WTC11 (cell line): ENCODE measurements at regions of chr22 and their contacts with region 1.

Region 1: DNA sequence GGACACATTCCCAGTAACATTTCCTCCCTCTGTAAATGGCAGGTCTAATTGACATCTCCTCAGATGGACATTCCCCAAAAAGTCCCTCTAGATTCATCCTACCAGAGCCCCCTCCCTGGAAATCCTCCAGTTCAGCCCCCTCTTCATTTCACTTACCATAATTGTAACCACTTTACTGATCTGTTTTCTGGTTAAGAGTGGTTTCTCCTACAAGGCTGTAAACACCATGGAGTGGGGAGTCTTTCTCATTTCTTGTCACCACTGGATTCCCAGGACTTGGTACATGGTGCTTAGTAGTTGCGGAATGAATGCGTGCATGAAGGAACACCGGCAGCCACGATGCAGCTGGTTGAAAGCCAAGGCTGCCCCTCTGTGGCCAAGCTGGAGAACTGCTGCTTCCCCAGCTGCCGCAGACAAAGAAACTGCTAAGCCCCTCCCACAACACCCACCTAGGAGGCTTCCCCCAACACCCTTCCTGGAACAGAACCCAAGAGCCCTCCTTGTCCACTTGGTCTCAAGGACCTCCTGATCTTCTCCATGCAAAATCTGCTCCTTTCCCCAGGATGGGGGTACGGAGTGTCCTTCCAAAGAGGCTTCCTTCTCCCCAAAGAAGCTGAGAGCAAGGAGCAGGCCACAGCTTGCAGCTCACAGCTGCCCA is 18.6 kb upstream of the SCARF2 start:
- DNase-seq: peak; percentile 86
- ATAC-seq: peak; percentile 97
- H3K4me3 Mint-ChIP-seq: no peak overlapping the region
- H3K27ac Mint-ChIP-seq: peak overlapping the region; percentile 57; the same call in 1 of the 2 replicates
- H3K4me1 Mint-ChIP-seq: peaks cover 19% of the 10 kb centered on the region
- H3K27me3 Mint-ChIP-seq: no peaks in the 10 kb centered on the region
- CTCF ChIP-seq: peak; percentile 69

Region 2: GRCh38 chr22:20430720-20431510 is 25.3 kb before region 1 on chr22:
- CTCF ChIA-PET with region 1: interaction called, 11 read pairs
- POLR2A ChIA-PET with region 1: no interaction called
- DNase-seq: peak; percentile 68
- ATAC-seq: peak; percentile 55
- H3K4me3 Mint-ChIP-seq: peak overlapping the region; percentile 66
- H3K27ac Mint-ChIP-seq: no peak overlapping the region
- H3K4me1 Mint-ChIP-seq: peaks cover 19% of the 10 kb centered on the region
- H3K27me3 Mint-ChIP-seq: peaks cover 60% of the 10 kb centered on the region
- CTCF ChIP-seq: no peak

Region 3: DNA sequence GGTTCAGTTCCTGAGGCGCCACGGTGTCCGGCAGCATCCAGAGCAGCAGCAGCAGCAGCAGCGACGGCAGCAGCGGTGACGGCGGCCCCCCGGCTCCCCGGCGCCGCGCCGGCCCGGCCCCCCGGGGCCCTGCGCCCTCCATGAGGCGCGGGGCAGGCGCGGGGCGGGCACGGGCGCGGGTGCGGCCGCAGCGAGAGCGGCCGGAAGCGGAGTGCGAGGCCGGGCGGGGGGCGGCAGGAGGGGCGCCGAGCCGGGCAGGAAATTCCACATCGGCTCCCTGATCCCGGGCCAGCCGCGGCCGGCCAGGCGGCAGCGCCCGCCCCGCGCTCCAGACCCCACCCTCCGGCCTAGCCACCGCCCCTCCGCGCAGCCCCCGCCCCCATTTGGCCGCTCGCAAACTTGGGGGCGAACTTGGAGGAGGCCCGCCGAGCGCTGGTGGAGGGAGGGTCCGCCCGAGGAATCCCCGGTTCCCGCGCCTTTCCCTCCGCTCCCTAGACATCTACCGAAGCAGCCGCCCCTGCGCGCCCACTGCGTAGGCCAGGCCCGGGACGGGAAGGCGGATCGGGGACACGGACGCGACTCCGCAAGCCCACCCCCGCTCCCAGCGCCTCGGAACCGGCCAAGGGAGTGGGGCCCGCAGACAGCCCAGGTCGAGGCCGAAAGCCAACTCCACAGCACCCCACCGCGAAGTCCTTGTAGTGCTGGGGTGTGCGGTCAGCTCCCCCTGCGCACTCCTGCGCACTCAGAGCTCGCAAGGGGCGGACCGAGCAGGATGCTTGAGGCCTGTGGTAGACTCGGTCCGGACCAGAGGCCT is 18.4 kb before region 1 on chr22 and contains the start of gene SCARF2:
- CTCF ChIA-PET with region 1: interaction called, 21 read pairs
- POLR2A ChIA-PET with region 1: no interaction called
- DNase-seq: peak; percentile 74
- ATAC-seq: peak; percentile 74
- H3K4me3 Mint-ChIP-seq: peak within 1 kb of the TSS; percentile 92
- H3K27ac Mint-ChIP-seq: no peak within 1 kb of the TSS
- H3K4me1 Mint-ChIP-seq: peaks cover 23% of the 10 kb centered on the region
- H3K27me3 Mint-ChIP-seq: peaks cover 54% of the 10 kb centered on the region
- CTCF ChIP-seq: no peak
- total RNA-seq, gene SCARF2: 17.4 to 26.3 TPM (median 17.5 TPM) in 3 replicates